ENCODE measurements at regions of chr2 and their contacts with region 1.

Region 1: GRCh38 chr2:55282110-55282917 is 13.3 kb upstream of the MTIF2 start:
- DNase-seq: peak; percentile 97
- ATAC-seq: peak; percentile 99

Region 2: GRCh38 chr2:55010149-55010591 is 272.1 kb before region 1 on chr2:
- intact Hi-C with region 1: no loop called
- DNase-seq: no peak
- ATAC-seq: peak; percentile 85

Region 3: DNA sequence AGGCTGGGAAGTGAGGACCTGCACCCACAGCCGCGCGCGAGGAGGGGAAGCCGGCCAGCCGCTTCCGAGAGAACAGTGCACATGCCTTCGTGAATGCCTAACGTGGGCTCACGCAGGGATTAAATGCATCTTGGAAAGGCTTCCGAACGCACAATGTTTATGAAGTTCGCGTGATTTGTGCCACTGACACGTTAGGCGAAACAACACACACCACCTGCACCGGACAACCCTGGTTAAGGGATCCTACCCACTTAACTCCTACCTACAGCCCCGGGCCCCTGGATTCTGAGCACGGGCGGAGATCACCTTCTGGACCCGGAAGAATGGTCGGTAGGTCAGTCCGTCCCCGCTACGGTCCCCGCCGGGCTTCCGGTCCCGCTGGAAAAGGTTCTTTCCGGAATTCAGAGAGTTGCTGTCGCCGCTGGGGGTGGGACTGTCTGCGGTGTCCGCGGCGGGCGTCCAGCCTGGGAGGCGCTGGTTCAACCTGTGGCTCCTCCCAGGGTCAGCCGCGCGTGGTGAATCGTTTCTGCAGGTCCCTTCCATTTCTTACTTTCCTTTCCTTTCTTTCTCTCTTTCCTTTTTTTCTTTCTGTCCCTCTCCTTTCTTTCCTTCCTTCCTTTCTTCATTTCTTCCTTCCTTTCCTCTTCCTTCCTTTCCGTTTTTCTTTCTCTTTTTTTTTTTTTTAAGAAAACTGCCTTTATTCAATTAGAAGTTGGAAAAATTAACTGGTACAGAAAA is 13.2 kb before region 1 on chr2 and contains the start of gene MTIF2:
- intact Hi-C with region 1: loop called (anchors 1 kb)
- DNase-seq: peak; percentile 97
- ATAC-seq: peak; percentile 100
- total RNA-seq, gene MTIF2: 49.6 TPM

Region 4: GRCh38 chr2:55519938-55520885 is 237.9 kb after region 1 on chr2:
- intact Hi-C with region 1: loop called (anchors 10 kb)
- DNase-seq: no peak
- ATAC-seq: peak; percentile 6

Measured in Right ventricle myocardium inferior (tissue), 1 donor.